Left colon (tissue), 2 donors: ENCODE measurements at regions of chr6 and their contacts with region 1.

Region 1: DNA sequence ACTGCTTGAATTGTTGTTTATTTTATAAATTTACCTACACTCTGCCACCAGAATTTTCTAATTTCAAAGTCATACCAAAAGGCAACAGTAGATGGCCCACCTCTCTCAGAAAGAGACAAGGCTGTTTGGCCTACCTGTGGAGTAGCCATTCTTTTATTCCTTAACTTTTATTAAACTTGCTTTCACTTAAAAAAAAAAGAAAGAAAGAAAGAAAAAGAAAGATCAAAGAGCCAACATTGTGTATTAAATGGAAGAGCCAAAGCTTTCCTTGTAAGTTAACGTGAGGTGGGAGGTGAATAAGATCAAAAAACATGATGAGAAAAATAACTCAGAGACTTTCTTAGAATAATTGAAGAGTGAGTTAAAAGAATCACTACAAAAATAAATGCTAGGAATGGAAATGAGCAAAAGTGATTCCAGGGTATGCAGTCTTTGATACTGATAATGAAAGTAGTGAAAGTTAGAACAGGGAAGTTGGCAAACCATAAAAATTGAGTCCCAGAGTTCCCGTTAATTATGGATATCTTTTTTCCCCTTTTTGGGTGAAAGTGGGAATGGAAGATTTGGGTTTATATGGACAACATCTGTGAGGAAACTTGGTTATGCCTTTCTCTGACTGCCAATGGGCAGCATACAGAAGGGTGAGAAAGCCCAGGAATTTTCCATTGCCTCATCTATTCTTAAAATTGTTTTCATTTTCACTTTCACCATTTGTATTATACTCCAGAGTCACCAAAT is 35.9 kb upstream of the MYB start:
- DNase-seq: no peak
- ATAC-seq: peak; percentile 86

Region 2: DNA sequence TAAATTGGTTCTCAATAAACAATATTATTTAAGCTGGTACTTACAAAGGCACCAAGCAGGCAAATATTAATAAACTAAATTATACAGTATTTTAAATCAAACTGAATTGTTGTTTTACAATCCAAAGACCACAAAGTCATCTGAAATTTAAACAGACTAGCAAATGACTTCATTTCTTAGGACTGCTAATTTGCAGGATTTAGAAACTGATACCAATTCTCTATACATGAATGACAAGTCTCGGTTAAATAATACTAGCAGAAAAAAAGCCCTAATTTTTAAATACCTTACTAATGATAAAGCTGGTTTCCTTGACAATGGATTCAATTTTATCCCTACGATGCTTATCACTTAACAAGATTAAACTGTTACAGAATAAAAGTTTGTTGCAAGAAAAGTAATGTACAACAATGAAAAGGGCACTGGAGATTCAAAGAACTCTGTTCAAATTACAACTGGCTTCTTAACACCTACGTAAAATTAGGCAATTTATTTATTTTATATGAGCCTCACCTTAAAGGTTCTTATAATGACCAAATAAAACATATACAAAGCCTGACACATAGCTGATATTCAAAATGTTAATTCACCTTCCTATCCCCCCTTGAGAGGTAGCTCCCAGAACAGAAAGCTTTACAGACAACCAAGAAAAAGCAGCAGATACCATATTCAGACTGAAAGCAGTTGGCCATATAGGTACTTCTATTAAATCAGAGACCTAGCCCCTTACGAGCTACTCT is 123.8 kb before region 1 on chr6:
- intact Hi-C with region 1: no loop called
- DNase-seq: no peak
- ATAC-seq: no peak

Region 3: GRCh38 chr6:135438907-135439535 is 293.8 kb after region 1 on chr6:
- intact Hi-C with region 1: loop called in 1 of 2 experiments (anchors 10 kb)
- DNase-seq: no peak
- ATAC-seq: peak; percentile 58